Activated CD4-positive, alpha-beta memory T cell treated with anti-CD3 and anti-CD28 coated beads, Interleukin-2, amount 10 ng/mL, durations not matched to agents 7 days and 5 days (primary cell): ENCODE measurements at regions of chr12 and their contacts with region 1.

Region 1: DNA sequence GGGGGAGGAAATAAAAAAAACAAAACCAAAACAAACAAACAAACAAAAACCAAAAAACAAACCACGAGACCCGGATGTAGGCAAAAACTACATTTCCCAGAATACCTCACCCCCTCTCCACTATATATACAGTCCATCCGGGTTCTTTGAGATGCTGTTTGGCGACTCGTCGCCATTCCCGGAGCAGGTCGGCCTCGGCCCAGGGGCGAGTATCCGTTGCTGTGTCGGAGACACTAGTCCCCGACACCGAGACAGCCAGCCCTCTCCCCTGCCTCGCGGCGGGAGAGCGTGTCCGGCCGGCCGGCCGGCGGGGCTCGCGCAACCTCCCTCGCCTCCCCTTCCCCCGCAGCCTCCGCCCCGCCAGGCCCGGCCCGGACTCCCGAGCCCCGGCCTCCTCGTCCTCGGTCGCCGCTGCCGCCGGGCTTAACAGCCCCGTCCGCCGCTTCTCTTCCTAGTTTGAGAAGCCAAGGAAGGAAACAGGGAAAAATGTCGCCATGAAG is at the start of gene RNF10:
- DNase-seq: peak; percentile 78
- H3K4me3 Mint-ChIP-seq: peak within 1 kb of the TSS; percentile 88
- H3K27ac Mint-ChIP-seq: peak within 1 kb of the TSS; percentile 93
- H3K4me1 Mint-ChIP-seq: peaks cover 52% of the 10 kb centered on the region
- H3K27me3 Mint-ChIP-seq: no peaks in the 10 kb centered on the region
- total RNA-seq, gene RNF10: 225 to 229 TPM

Region 2: GRCh38 chr12:120495723-120496412 is 38.4 kb before region 1 on chr12 and contains the start of gene DYNLL1:
- CTCF ChIA-PET with region 1: interaction called, 4 read pairs
- POLR2A ChIA-PET with region 1: interaction called, 18 read pairs
- DNase-seq: peak; percentile 97
- H3K4me3 Mint-ChIP-seq: peak within 1 kb of the TSS; percentile 88
- H3K27ac Mint-ChIP-seq: peak within 1 kb of the TSS; percentile 69
- H3K4me1 Mint-ChIP-seq: peaks cover 38% of the 10 kb centered on the region
- H3K27me3 Mint-ChIP-seq: no peaks in the 10 kb centered on the region
- total RNA-seq, gene DYNLL1: 209 to 216 TPM

Region 3: GRCh38 chr12:120546050-120546386 is 11.8 kb after region 1 on chr12:
- CTCF ChIA-PET with region 1: no interaction called
- POLR2A ChIA-PET with region 1: interaction called, 16 read pairs
- DNase-seq: no peak
- H3K4me3 Mint-ChIP-seq: no peak overlapping the region
- H3K27ac Mint-ChIP-seq: no peak overlapping the region
- H3K4me1 Mint-ChIP-seq: peaks cover 7% of the 10 kb centered on the region
- H3K27me3 Mint-ChIP-seq: no peaks in the 10 kb centered on the region

Region 4: GRCh38 chr12:120598674-120599463 is 64.6 kb after region 1 on chr12:
- CTCF ChIA-PET with region 1: no interaction called
- POLR2A ChIA-PET with region 1: no interaction called
- DNase-seq: no peak
- H3K4me3 Mint-ChIP-seq: no peak overlapping the region
- H3K27ac Mint-ChIP-seq: no peak overlapping the region
- H3K4me1 Mint-ChIP-seq: no peaks in the 10 kb centered on the region
- H3K27me3 Mint-ChIP-seq: peaks cover 17% of the 10 kb centered on the region